ENCODE measurements at regions of chr14 and their contacts with region 1.

Region 1: GRCh38 chr14:105581551-105582341 is 55.4 kb downstream of the TMEM121 start:
- DNase-seq: peak in 2 of 3 donors; percentile 28 to 45
- ATAC-seq: peak; percentile 38
- H3K4me3 ChIP-seq: no peak overlapping the region
- H3K4me1 ChIP-seq: no peaks in the 10 kb centered on the region
- CTCF ChIP-seq: no peak

Region 2: GRCh38 chr14:105700622-105701288 is 119.0 kb after region 1 on chr14:
- intact Hi-C with region 1: loop called (anchors 5 to 10 kb)
- DNase-seq: no peak
- ATAC-seq: peak; percentile 8
- H3K4me3 ChIP-seq: no peak overlapping the region
- H3K4me1 ChIP-seq: no peaks in the 10 kb centered on the region
- CTCF ChIP-seq: no peak